Left lung (tissue), 14 donors: ENCODE measurements at regions of chr3 and their contacts with region 1.

Region 1: GRCh38 chr3:122101646-122102045 is 46.5 kb downstream of the CD86 start:
- DNase-seq: peak in 2 of 4 donors; percentile 25 to 44
- ATAC-seq: peak; percentile 81
- H3K4me3 ChIP-seq: no peak overlapping the region
- H3K27ac ChIP-seq: no peak overlapping the region
- H3K4me1 ChIP-seq: peaks cover 0 to 10% of the 10 kb centered on the region in 2 donors
- H3K27me3 ChIP-seq: no peaks in the 10 kb centered on the region
- CTCF ChIP-seq: peak; percentile 23 to 33

Region 2: GRCh38 chr3:122258757-122259371 is 157.2 kb after region 1 on chr3:
- intact Hi-C with region 1: loop called in 1 of 2 experiments (anchors 10 kb)
- DNase-seq: peak; percentile 26 to 87 (median 67)
- ATAC-seq: peak; percentile 96
- H3K4me3 ChIP-seq: no peak overlapping the region
- H3K27ac ChIP-seq: no peak overlapping the region
- H3K4me1 ChIP-seq: peaks cover 0 to 16% of the 10 kb centered on the region in 2 donors
- H3K27me3 ChIP-seq: peaks cover 0 to 14% of the 10 kb centered on the region in 2 donors
- CTCF ChIP-seq: peak; percentile 47 to 49